WTC11 (cell line): ENCODE measurements at regions of chr6 and their contacts with region 1.

Region 1: DNA sequence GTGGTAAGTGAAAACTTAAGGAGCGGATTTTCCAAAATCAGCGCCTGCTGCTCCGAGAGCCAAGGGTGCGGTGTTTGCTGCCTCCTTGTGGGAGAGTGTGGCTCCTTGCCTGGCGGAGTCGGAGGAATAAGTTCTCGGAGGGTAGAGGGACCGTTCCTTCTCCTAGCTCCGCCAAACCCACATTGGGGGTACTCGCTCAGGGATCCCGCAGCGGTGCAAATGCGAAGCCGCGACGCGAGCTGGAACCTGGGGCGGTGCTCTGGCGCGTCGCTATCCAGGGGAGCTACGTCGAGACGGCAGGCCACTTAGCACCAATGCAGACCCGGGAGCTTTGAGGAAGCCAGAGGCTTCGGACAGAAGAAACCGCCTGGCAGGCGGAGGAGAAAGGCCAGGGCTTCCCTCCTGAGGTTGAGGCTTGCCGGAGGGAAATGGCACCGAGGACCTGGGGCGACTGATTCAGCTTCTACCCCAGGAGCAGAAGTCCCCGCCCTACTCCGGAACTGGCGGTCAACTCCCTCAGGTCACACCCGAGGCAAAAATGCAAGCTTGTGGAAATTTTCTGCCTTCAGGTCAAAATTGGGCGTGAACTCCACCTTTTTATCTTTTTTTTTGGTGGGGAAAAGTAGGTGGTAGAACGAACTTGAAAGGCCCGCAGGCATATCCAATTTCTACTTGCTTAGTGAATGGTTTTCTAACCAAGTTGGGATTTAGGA is 5.7 kb upstream of the DDX43 start:
- DNase-seq: peak; percentile 84
- ATAC-seq: peak; percentile 96
- H3K4me3 Mint-ChIP-seq: peak overlapping the region; percentile 72
- H3K27ac Mint-ChIP-seq: peak overlapping the region; percentile 60
- H3K4me1 Mint-ChIP-seq: peaks cover 29% of the 10 kb centered on the region
- H3K27me3 Mint-ChIP-seq: peaks cover 12% of the 10 kb centered on the region
- CTCF ChIP-seq: peak; percentile 29; the same call in 1 of the 2 replicates

Region 2: GRCh38 chr6:73285674-73286283 is 103.2 kb before region 1 on chr6:
- CTCF ChIA-PET with region 1: interaction called, 67 read pairs
- POLR2A ChIA-PET with region 1: interaction called, 5 read pairs
- DNase-seq: no peak
- ATAC-seq: peak; percentile 84
- H3K4me3 Mint-ChIP-seq: no peak overlapping the region
- H3K27ac Mint-ChIP-seq: no peak overlapping the region
- H3K4me1 Mint-ChIP-seq: peaks cover 9% of the 10 kb centered on the region; the same call in 1 of the 2 replicates
- H3K27me3 Mint-ChIP-seq: no peaks in the 10 kb centered on the region
- CTCF ChIP-seq: no peak

Region 3: GRCh38 chr6:73309769-73310502 is 79.0 kb before region 1 on chr6:
- CTCF ChIA-PET with region 1: interaction called, 33 read pairs
- POLR2A ChIA-PET with region 1: interaction called, 9 read pairs
- DNase-seq: peak; percentile 68
- ATAC-seq: peak; percentile 78
- H3K4me3 Mint-ChIP-seq: peak overlapping the region; percentile 95
- H3K27ac Mint-ChIP-seq: peak overlapping the region; percentile 93
- H3K4me1 Mint-ChIP-seq: peaks cover 24% of the 10 kb centered on the region
- H3K27me3 Mint-ChIP-seq: peaks cover 38% of the 10 kb centered on the region
- CTCF ChIP-seq: no peak

Region 4: GRCh38 chr6:73329201-73329600 is 59.8 kb before region 1 on chr6:
- CTCF ChIA-PET with region 1: interaction called, 44 read pairs
- POLR2A ChIA-PET with region 1: no interaction called
- DNase-seq: no peak
- ATAC-seq: no peak
- H3K4me3 Mint-ChIP-seq: no peak overlapping the region
- H3K27ac Mint-ChIP-seq: no peak overlapping the region
- H3K4me1 Mint-ChIP-seq: peaks cover 10% of the 10 kb centered on the region
- H3K27me3 Mint-ChIP-seq: no peaks in the 10 kb centered on the region
- CTCF ChIP-seq: no peak

Region 5: GRCh38 chr6:73400656-73401055 is 11.7 kb after region 1 on chr6:
- CTCF ChIA-PET with region 1: interaction called, 14 read pairs
- POLR2A ChIA-PET with region 1: interaction called, 11 read pairs
- DNase-seq: no peak
- ATAC-seq: no peak
- H3K4me3 Mint-ChIP-seq: no peak overlapping the region
- H3K27ac Mint-ChIP-seq: no peak overlapping the region
- H3K4me1 Mint-ChIP-seq: peaks cover 9% of the 10 kb centered on the region
- H3K27me3 Mint-ChIP-seq: no peaks in the 10 kb centered on the region
- CTCF ChIP-seq: no peak

Region 6: GRCh38 chr6:73451223-73452107 is 62.5 kb after region 1 on chr6:
- CTCF ChIA-PET with region 1: interaction called, 11 read pairs
- POLR2A ChIA-PET with region 1: no interaction called
- DNase-seq: peak; percentile 59
- ATAC-seq: peak; percentile 65
- H3K4me3 Mint-ChIP-seq: peak overlapping the region; percentile 67
- H3K27ac Mint-ChIP-seq: no peak overlapping the region
- H3K4me1 Mint-ChIP-seq: peaks cover 6% of the 10 kb centered on the region
- H3K27me3 Mint-ChIP-seq: peaks cover 35% of the 10 kb centered on the region
- CTCF ChIP-seq: no peak

Region 7: GRCh38 chr6:73461537-73462350 is 72.8 kb after region 1 on chr6 and contains the start of gene MTO1:
- CTCF ChIA-PET with region 1: interaction called, 11 read pairs
- POLR2A ChIA-PET with region 1: interaction called, 3 read pairs
- DNase-seq: peak; percentile 66
- ATAC-seq: peak; percentile 93
- H3K4me3 Mint-ChIP-seq: peak within 1 kb of the TSS; percentile 98
- H3K27ac Mint-ChIP-seq: peak within 1 kb of the TSS; percentile 97
- H3K4me1 Mint-ChIP-seq: peaks cover 7% of the 10 kb centered on the region; the same call in 1 of the 2 replicates
- H3K27me3 Mint-ChIP-seq: no peaks in the 10 kb centered on the region
- CTCF ChIP-seq: no peak
- total RNA-seq, gene MTO1: 24.1 to 32.4 TPM (median 28.2 TPM) in 3 replicates